K562 (cell line): ENCODE measurements at regions of chr7 and their contacts with region 1.

Region 1: DNA sequence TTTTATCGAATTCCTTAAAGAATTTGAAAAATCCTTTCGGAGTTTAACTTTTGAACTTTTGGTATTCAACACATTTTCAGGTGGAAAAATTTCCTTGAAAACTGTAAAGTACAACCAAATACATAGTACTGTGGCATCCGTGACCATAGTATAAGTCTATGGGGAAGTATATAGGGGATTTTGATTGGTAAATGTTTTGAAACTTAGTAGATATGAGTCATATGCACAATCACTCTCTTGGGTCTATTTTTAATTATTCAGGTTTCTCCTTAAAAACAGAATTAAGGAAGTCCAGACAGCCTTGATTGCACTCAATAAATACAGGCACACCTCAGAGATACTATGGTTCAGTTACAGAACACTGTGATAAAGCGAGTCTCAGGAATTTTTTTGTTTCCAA is 64.2 kb downstream of the AVL9 start:
- DNase-seq: no peak
- ATAC-seq: no peak
- H3K4me3 ChIP-seq: no peak overlapping the region
- H3K27ac ChIP-seq: no peak overlapping the region
- H3K4me1 ChIP-seq: no peaks in the 10 kb centered on the region
- H3K27me3 ChIP-seq: no peaks in the 10 kb centered on the region
- CTCF ChIP-seq: no peak
- EP300 ChIP-seq: no peak
- POLR2A ChIP-seq: no peak
- RAD21 ChIP-seq: no peak

Region 2: GRCh38 chr7:32479574-32480200 is 79.8 kb before region 1 on chr7:
- CTCF ChIA-PET with region 1: no interaction called
- POLR2A ChIA-PET with region 1: no interaction called
- in situ Hi-C with region 1: no loop called
- intact Hi-C with region 1: no loop called
- DNase-seq: peak; percentile 56 to 72 (median 57)
- ATAC-seq: peak; percentile 53
- H3K4me3 ChIP-seq: no peak overlapping the region
- H3K27ac ChIP-seq: no peak overlapping the region
- H3K4me1 ChIP-seq: no peaks in the 10 kb centered on the region; a peak in 2 of 5 replicates
- H3K27me3 ChIP-seq: peaks cover 4 to 5% of the 10 kb centered on the region in 2 experiments; a peak in 2 of 5 replicates
- CTCF ChIP-seq: peak; percentile 86 to 98 (median 89)
- EP300 ChIP-seq: no peak
- POLR2A ChIP-seq: no peak
- RAD21 ChIP-seq: peak; percentile 83 to 93

Region 3: DNA sequence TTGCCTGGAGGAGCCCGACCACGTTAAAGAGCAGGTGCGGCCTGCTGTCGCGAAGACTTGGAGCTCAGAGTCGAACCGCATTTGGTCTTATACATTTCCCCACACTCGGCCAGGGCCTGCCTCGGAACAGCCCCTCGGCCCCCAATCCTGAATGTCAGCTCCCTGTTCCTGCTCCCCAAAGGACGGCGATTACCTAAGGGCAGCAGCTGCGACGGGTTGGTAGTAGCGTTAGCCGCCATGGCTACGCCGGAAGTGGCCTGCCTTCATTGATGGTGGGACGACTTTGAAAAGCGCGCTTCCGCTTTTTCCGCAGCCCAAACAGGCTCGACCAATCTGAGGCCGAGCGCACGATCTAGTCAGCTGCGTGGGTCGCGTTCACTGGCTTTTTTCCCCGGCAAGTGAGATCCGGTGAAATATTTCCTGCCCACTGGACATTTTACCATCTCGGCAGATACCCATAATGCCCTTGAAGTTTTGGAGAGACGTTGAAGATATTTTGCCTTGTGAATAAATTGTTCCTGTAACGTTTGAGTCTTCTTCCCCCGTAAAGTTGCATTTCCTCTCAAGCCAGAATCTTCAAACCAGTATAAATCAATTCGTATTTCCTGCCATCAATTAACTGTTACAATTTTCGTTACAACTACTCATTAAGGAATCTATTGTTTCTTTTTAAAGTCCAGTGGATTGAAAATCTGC is 69.2 kb before region 1 on chr7 and contains the start of gene LSM5:
- CTCF ChIA-PET with region 1: no interaction called
- POLR2A ChIA-PET with region 1: no interaction called
- in situ Hi-C with region 1: no loop called
- intact Hi-C with region 1: loop called (anchors 5 kb)
- DNase-seq: peak; percentile 71 to 97 (median 77)
- ATAC-seq: peak; percentile 87
- H3K4me3 ChIP-seq: peak within 1 kb of the TSS; percentile 62
- H3K27ac ChIP-seq: peak within 1 kb of the TSS; percentile 81
- H3K4me1 ChIP-seq: peaks cover 0 to 3% of the 10 kb centered on the region in 2 experiments; a peak in 2 of 5 replicates
- H3K27me3 ChIP-seq: no peaks in the 10 kb centered on the region
- CTCF ChIP-seq: no peak
- EP300 ChIP-seq: peak; percentile 46; the same call in 1 of the 2 replicates
- POLR2A ChIP-seq: peak; percentile 91
- RAD21 ChIP-seq: no peak; a peak in 1 of 4 replicates
- polyA plus RNA-seq, gene LSM5: 513 to 620 TPM

Region 4: DNA sequence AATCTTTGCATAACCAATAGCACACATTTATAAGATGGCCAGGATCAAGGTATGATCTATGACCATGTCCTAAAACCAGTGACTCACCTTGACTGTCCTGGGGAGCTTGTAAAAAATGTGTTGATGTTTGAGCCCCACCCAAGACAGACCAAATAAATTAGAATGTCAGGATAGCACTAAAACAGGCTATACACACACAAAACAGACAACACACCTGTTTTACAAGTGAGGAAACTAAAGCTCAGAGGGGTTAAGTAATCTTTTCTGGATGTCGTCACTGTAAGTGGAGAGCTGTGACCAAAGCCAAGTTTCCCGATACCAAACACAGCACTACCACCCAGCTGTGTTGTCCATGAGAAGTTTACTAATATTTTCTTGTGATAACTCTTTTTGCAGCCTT is 20.3 kb after region 1 on chr7:
- CTCF ChIA-PET with region 1: no interaction called
- POLR2A ChIA-PET with region 1: interaction called, 4 read pairs
- in situ Hi-C with region 1: no loop called
- intact Hi-C with region 1: loop called (anchors 1 kb)
- DNase-seq: no peak
- ATAC-seq: no peak
- H3K4me3 ChIP-seq: no peak overlapping the region
- H3K27ac ChIP-seq: no peak overlapping the region
- H3K4me1 ChIP-seq: no peaks in the 10 kb centered on the region
- H3K27me3 ChIP-seq: no peaks in the 10 kb centered on the region
- CTCF ChIP-seq: no peak
- EP300 ChIP-seq: no peak
- POLR2A ChIP-seq: no peak
- RAD21 ChIP-seq: no peak

Region 5: DNA sequence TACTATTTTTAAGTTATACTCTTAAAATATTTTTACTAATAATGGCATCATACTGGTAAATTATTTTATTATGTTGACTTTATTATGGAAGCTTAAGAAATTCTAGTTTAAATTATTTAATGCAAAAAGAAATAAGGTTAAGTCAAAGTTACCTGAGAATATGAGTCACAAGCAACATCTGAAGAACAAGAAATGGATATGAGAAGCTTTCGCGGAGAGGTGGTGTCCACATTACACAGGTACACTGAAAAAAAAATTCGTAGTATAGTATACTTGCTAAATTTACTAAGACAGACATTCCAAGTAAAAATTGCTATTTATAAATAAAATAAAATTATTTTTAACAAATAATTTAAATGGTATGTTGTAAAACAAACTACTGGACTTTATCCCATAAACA is 79.6 kb after region 1 on chr7:
- CTCF ChIA-PET with region 1: no interaction called
- POLR2A ChIA-PET with region 1: no interaction called
- in situ Hi-C with region 1: no loop called
- intact Hi-C with region 1: no loop called
- DNase-seq: no peak
- ATAC-seq: no peak
- H3K4me3 ChIP-seq: no peak overlapping the region
- H3K27ac ChIP-seq: no peak overlapping the region
- H3K4me1 ChIP-seq: peaks cover 0 to 7% of the 10 kb centered on the region in 2 experiments; a peak in 3 of 5 replicates
- H3K27me3 ChIP-seq: no peaks in the 10 kb centered on the region
- CTCF ChIP-seq: no peak
- EP300 ChIP-seq: no peak
- POLR2A ChIP-seq: no peak
- RAD21 ChIP-seq: no peak

Region 6: DNA sequence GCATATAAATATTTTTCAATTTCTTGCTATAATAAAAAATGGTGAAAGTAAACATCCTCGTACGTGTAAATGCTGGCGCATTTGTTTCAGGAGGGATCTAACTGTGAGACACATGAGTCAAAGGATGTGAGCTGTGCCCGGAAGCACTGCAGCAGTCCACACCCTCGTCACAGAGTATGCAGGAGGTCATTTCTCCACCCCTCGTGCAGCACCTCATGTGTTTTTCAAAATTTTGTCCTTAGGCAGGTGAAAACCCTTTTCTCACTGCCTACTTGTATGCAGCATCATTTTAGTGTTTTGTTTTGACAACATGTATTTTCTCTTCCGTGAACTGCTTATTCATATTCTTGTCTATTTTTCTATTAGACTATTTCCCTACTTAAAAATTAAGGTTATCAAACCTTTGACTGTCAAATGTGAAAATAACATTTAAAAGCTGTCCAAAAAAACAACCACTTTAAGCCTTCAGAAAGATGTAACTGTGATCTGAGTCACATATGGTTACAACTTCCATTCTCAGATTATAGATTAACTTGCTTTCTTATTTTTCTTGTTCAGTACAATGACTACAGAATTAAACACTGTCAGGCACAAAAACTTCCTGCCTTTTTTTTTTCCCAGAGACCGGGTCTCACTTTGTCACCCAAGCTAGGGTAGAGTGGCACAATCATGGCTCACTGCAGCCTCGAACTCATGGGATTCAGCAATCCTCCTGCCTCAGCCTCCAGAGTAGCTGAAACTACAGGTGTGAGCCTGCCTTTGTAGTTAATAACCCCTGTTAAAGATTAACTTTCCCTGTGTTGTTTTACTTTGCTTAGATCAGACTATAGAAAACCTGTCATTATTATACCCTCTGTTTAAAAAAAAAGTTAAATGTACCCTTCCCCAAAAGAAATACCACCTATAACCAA is 98.8 kb after region 1 on chr7:
- CTCF ChIA-PET with region 1: no interaction called
- POLR2A ChIA-PET with region 1: no interaction called
- in situ Hi-C with region 1: no loop called
- intact Hi-C with region 1: no loop called
- DNase-seq: peak; percentile 12 to 83 (median 32)
- ATAC-seq: peak; percentile 78
- H3K4me3 ChIP-seq: no peak overlapping the region
- H3K27ac ChIP-seq: peak overlapping the region; percentile 47
- H3K4me1 ChIP-seq: peaks cover 4 to 35% of the 10 kb centered on the region in 2 experiments
- H3K27me3 ChIP-seq: no peaks in the 10 kb centered on the region
- CTCF ChIP-seq: no peak
- EP300 ChIP-seq: no peak; the same call in 1 of the 2 replicates
- POLR2A ChIP-seq: peak; percentile 47; the same call in 1 of the 2 replicates
- RAD21 ChIP-seq: peak in 1 of 2 experiments; percentile 11; a peak in 2 of 4 replicates